ENCODE measurements at regions of chr20 and their contacts with region 1.

Region 1: DNA sequence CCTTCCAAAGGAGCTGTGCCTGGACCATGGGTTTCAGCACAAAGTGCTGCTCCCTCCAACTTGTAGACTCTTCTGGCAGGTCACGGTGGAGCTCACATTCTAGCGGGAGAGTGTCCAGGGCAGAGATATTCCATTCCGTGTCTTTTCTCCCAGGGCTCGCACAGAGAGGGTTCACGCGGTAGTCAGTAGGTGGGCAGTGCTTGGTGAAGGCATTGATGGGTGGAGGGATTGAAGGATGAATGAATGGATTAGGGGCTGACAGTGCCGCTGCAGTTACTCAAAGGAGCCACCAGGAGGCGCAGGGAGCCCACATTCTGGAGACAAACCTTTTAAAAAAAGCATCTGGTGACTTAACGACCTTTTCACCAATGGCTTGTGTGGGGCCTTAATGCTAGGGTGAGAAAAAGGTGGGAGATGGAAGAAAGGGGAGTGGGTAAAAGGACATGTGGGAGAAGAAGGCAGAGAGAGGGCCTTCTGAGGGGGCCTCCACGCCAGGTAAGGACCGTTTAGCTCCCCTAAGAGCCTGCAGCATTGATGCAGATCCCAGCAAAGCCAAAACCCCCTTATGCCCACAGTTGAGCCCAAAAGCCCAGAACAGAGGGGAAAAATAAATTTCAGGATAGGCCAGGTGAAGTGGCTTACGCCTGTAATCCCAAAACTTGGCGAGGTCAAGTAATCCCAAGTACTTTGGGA is 17.5 kb upstream of the FAM110A start:
- DNase-seq: peak; percentile 76
- ATAC-seq: peak; percentile 88
- H3K4me3 Mint-ChIP-seq: 0 out of 2 replicates have a peak overlapping the region, but pooled peaks have one; percentile 9
- H3K27ac Mint-ChIP-seq: no peak overlapping the region
- H3K4me1 Mint-ChIP-seq: peaks cover 4% of the 10 kb centered on the region; the same call in 1 of the 2 replicates
- H3K27me3 Mint-ChIP-seq: peaks cover 2% of the 10 kb centered on the region; the same call in 1 of the 2 replicates
- CTCF ChIP-seq: peak; percentile 99

Region 2: DNA sequence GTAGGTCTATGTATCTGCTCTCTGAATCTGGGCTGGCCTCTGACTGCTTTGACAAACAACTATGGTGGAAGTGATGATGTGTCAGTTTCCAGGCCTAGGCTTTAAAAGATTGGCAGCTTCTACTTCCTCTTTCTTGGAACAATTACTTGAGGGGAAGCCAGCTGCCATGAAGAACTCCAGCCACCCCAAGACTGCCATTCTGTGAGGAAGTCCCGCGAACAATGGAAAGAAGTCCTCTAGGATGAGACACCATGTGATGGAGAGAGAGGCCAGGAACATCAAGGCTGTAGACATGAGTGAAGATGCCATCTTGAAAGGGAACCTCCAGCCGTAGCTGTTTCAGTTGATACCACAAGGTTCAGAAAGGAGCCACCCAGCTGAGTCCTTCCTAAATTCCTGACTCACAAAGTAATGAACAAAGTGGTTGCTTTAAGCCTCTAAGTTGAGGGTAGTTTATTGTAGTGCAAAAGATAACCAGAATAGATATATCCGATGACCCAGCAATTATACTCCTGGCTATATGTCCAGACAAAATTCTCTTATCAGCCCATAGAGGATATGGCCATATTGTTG is 190.6 kb before region 1 on chr20:
- CTCF ChIA-PET with region 1: no interaction called
- POLR2A ChIA-PET with region 1: no interaction called
- DNase-seq: no peak
- ATAC-seq: no peak
- H3K4me3 Mint-ChIP-seq: no peak overlapping the region
- H3K27ac Mint-ChIP-seq: no peak overlapping the region
- H3K4me1 Mint-ChIP-seq: peaks cover 13% of the 10 kb centered on the region
- H3K27me3 Mint-ChIP-seq: no peaks in the 10 kb centered on the region; the same call in none of the 2 replicates
- CTCF ChIP-seq: no peak

Region 3: GRCh38 chr20:833450-834150 is 17.5 kb after region 1 on chr20 and contains the start of gene FAM110A:
- CTCF ChIA-PET with region 1: interaction called, 30 read pairs
- POLR2A ChIA-PET with region 1: no interaction called
- DNase-seq: peak; percentile 96
- ATAC-seq: peak; percentile 97
- H3K4me3 Mint-ChIP-seq: peak within 1 kb of the TSS; percentile 76
- H3K27ac Mint-ChIP-seq: no peak within 1 kb of the TSS
- H3K4me1 Mint-ChIP-seq: peaks cover 12% of the 10 kb centered on the region
- H3K27me3 Mint-ChIP-seq: peaks cover 20% of the 10 kb centered on the region
- CTCF ChIP-seq: no peak
- total RNA-seq, gene FAM110A: 17.2 to 18.8 TPM (median 18.0 TPM) in 3 replicates

Region 4: DNA sequence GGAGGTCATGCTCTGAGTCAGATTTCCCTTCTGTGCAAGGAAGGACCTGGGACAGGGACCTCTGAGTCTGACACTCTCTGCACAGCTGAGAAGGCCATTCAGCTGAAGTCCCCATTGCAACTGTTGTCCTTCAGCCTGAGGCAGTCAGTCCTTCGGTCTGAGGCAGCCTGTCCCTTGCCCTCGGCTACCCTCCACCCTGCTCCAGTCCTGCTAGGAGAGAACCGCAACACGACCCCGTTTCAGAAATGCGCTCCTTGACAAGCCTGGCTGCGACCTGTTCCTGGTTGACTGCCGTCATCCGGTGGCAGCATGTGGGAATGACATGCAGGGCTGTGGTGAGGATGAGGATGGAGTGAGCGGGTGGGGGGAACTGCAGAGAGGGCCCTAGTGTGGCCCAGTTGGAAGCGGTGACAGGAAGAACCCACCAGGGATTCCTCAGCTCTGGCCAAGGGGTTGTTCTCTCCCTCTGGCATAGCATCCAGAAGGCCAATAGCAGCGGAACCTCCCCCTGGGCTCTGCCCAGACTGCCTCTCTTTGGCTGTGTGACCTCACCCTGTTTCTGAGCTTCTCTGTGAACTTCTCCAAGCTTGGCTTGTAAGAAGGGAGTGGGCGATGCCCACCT is 140.4 kb after region 1 on chr20:
- CTCF ChIA-PET with region 1: interaction called, 25 read pairs
- POLR2A ChIA-PET with region 1: no interaction called
- DNase-seq: peak; percentile 88
- ATAC-seq: peak; percentile 88
- H3K4me3 Mint-ChIP-seq: no peak overlapping the region
- H3K27ac Mint-ChIP-seq: no peak overlapping the region
- H3K4me1 Mint-ChIP-seq: peaks cover 2% of the 10 kb centered on the region; the same call in 1 of the 2 replicates
- H3K27me3 Mint-ChIP-seq: peaks cover 5% of the 10 kb centered on the region
- CTCF ChIP-seq: peak; percentile 96

Region 5: GRCh38 chr20:1118336-1119127 is 302.5 kb after region 1 on chr20 and contains the start of gene PSMF1:
- CTCF ChIA-PET with region 1: interaction called, 10 read pairs
- POLR2A ChIA-PET with region 1: no interaction called
- DNase-seq: peak; percentile 92
- ATAC-seq: peak; percentile 90
- H3K4me3 Mint-ChIP-seq: peak within 1 kb of the TSS; percentile 95
- H3K27ac Mint-ChIP-seq: peak within 1 kb of the TSS; percentile 29
- H3K4me1 Mint-ChIP-seq: peaks cover 36% of the 10 kb centered on the region
- H3K27me3 Mint-ChIP-seq: peaks cover 6% of the 10 kb centered on the region
- CTCF ChIP-seq: no peak
- total RNA-seq, gene PSMF1: 97.3 to 113 TPM (median 107 TPM) in 3 replicates